ENCODE measurements at regions of chr15 and their contacts with region 1.

Region 1: GRCh38 chr15:100341662-100342560 is at the start of gene ADAMTS17:
- DNase-seq: peak; percentile 91
- H3K4me3 ChIP-seq: peak within 1 kb of the TSS; percentile 53 to 66 (median 63)
- H3K27ac ChIP-seq: no peak within 1 kb of the TSS
- H3K4me1 ChIP-seq: peaks cover 6% of the 10 kb centered on the region
- H3K27me3 ChIP-seq: peaks cover 7% of the 10 kb centered on the region
- CTCF ChIP-seq: peak; percentile 79 to 93
- total RNA-seq, gene ADAMTS17: 0.45 to 1.7 TPM

Region 2: GRCh38 chr15:99692825-99693224 is 649.1 kb before region 1 on chr15:
- CTCF ChIA-PET with region 1: no interaction called
- dilution Hi-C with region 1: no loop called
- in situ Hi-C with region 1: no loop called
- intact Hi-C with region 1: no loop called
- DNase-seq: peak; percentile 39
- H3K4me3 ChIP-seq: no peak overlapping the region
- H3K27ac ChIP-seq: no peak overlapping the region
- H3K4me1 ChIP-seq: peaks cover 2% of the 10 kb centered on the region
- H3K27me3 ChIP-seq: no peaks in the 10 kb centered on the region
- CTCF ChIP-seq: no peak

Region 3: GRCh38 chr15:99928429-99928981 is 413.4 kb before region 1 on chr15:
- CTCF ChIA-PET with region 1: no interaction called
- dilution Hi-C with region 1: loop called (anchors 25 kb)
- in situ Hi-C with region 1: loop called (anchors 5 to 10 kb)
- intact Hi-C with region 1: loop called (anchors 2 kb)
- DNase-seq: peak; percentile 65
- H3K4me3 ChIP-seq: peak overlapping the region; percentile 30 to 69 (median 60)
- H3K27ac ChIP-seq: no peak overlapping the region
- H3K4me1 ChIP-seq: peaks cover 14% of the 10 kb centered on the region
- H3K27me3 ChIP-seq: no peaks in the 10 kb centered on the region
- CTCF ChIP-seq: peak; percentile 24 to 66

Region 4: GRCh38 chr15:100078511-100079220 is 263.2 kb before region 1 on chr15:
- CTCF ChIA-PET with region 1: interaction called, 3 read pairs
- dilution Hi-C with region 1: no loop called
- in situ Hi-C with region 1: no loop called
- intact Hi-C with region 1: loop called (anchors 10 kb)
- DNase-seq: peak; percentile 76
- H3K4me3 ChIP-seq: no peak overlapping the region
- H3K27ac ChIP-seq: no peak overlapping the region
- H3K4me1 ChIP-seq: peaks cover 9% of the 10 kb centered on the region
- H3K27me3 ChIP-seq: peaks cover 31% of the 10 kb centered on the region
- CTCF ChIP-seq: peak; percentile 5 to 14

Region 5: GRCh38 chr15:100448492-100448891 is 106.6 kb after region 1 on chr15:
- CTCF ChIA-PET with region 1: no interaction called
- dilution Hi-C with region 1: no loop called
- in situ Hi-C with region 1: no loop called
- intact Hi-C with region 1: no loop called
- DNase-seq: no peak
- H3K4me3 ChIP-seq: no peak overlapping the region
- H3K27ac ChIP-seq: no peak overlapping the region
- H3K4me1 ChIP-seq: no peaks in the 10 kb centered on the region
- H3K27me3 ChIP-seq: no peaks in the 10 kb centered on the region
- CTCF ChIP-seq: no peak

Region 6: GRCh38 chr15:100572362-100572983 is 230.6 kb after region 1 on chr15:
- CTCF ChIA-PET with region 1: interaction called, 6 read pairs
- dilution Hi-C with region 1: no loop called
- in situ Hi-C with region 1: no loop called
- intact Hi-C with region 1: loop called (anchors 1 kb)
- DNase-seq: no peak
- H3K4me3 ChIP-seq: no peak overlapping the region
- H3K27ac ChIP-seq: no peak overlapping the region
- H3K4me1 ChIP-seq: no peaks in the 10 kb centered on the region
- H3K27me3 ChIP-seq: no peaks in the 10 kb centered on the region
- CTCF ChIP-seq: peak; percentile 29 to 34

Measured in mammary epithelial cell (primary cell).